ENCODE measurements at regions of chr12 and their contacts with region 1.

Region 1: GRCh38 chr12:77049767-77050353 is 15.5 kb downstream of the E2F7 start:
- DNase-seq: peak; percentile 64 to 80 (median 78)
- H3K4me3 ChIP-seq: no peak overlapping the region
- H3K27ac ChIP-seq: no peak overlapping the region
- H3K4me1 ChIP-seq: no peaks in the 10 kb centered on the region
- H3K27me3 ChIP-seq: no peaks in the 10 kb centered on the region

Region 2: DNA sequence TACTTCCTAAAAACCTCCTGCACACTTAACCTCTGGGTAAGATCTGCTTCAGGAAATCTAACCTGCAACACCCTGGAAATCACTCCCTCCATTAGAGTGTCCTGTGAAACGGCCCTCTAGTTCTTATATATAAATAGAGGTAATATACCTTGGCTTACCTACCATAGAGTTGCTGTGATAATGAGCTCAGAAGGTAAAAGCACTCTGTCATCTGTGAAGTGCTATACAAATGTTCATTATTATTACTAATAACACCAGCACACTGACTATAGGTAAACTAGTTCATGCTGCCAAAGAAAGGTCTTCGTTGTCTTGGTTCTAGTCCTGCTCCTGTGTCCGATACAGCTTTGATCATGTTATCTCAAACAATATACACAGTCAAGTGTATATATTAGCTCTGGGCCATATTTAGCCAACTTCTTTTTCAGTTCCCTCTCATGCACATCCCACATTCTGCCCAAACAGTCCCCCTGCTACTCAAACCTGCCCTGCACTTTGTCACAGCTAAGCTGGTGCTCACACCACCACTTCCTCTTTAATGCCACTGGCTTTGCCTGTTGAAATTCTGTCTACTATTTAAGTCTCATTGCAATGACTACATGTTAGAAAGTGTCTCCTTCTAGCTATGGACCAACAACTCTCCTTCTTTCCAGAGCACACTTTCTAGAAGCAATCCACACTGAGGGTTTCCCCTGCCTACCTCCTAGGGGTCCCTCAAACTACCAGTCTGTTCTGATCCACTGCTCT is 10.4 kb after region 1 on chr12:
- CTCF ChIA-PET with region 1: interaction called, 33 read pairs
- POLR2A ChIA-PET with region 1: no interaction called
- DNase-seq: peak; percentile 25 to 81 (median 79)
- H3K4me3 ChIP-seq: no peak overlapping the region
- H3K27ac ChIP-seq: no peak overlapping the region
- H3K4me1 ChIP-seq: peaks cover 0 to 26% (median 11%) of the 10 kb centered on the region in 4 experiments
- H3K27me3 ChIP-seq: no peaks in the 10 kb centered on the region